Activated CD8-positive, alpha-beta T cell treated with anti-CD3 and anti-CD28 coated beads, Interleukin-2, amount 10 ng/mL, durations not matched to agents 7 days and 5 days (primary cell): ENCODE measurements at regions of chr6 and their contacts with region 1.

Region 1: GRCh38 chr6:159098636-159099106 is 53.9 kb upstream of the TAGAP start:
- DNase-seq: peak; percentile 71
- ATAC-seq: peak; percentile 57
- H3K4me3 Mint-ChIP-seq: peak overlapping the region; percentile 58
- H3K27ac Mint-ChIP-seq: peak overlapping the region; percentile 90
- H3K4me1 Mint-ChIP-seq: peaks cover 76% of the 10 kb centered on the region
- H3K27me3 Mint-ChIP-seq: no peaks in the 10 kb centered on the region

Region 2: DNA sequence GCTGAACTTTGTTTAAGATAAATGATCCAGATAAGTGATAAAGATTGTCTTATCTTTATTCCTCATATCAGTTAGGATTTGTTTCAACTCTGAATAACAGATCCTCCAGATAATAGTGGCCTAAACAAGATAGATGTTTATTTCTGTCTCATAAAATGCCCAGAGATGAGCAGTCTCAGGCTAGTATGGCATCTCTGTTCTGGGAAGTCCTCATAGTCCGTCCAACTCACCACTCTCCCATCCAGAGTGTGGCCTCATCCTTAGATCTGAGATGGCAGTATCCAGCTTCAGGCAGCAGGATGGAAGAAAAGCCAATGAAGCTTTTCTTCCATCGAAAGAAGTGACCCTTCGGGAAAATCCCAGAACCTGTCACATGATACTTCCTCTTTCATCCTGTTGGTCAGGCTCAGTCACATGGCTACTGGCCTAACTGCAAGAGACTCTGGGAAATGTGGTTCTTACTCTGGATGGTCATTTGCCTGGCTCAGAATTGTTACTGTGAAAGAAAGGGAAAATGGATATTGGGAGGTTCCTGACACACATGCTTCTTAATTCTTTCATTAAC is 24.5 kb before region 1 on chr6:
- CTCF ChIA-PET with region 1: interaction called, 33 read pairs
- POLR2A ChIA-PET with region 1: no interaction called
- DNase-seq: peak; percentile 17
- ATAC-seq: no peak
- H3K4me3 Mint-ChIP-seq: no peak overlapping the region
- H3K27ac Mint-ChIP-seq: no peak overlapping the region
- H3K4me1 Mint-ChIP-seq: peaks cover 56% of the 10 kb centered on the region
- H3K27me3 Mint-ChIP-seq: no peaks in the 10 kb centered on the region

Region 3: GRCh38 chr6:159084493-159085091 is 14.1 kb before region 1 on chr6:
- CTCF ChIA-PET with region 1: interaction called, 33 read pairs
- POLR2A ChIA-PET with region 1: interaction called, 13 read pairs
- DNase-seq: no peak
- ATAC-seq: no peak
- H3K4me3 Mint-ChIP-seq: no peak overlapping the region
- H3K27ac Mint-ChIP-seq: no peak overlapping the region
- H3K4me1 Mint-ChIP-seq: peaks cover 25% of the 10 kb centered on the region
- H3K27me3 Mint-ChIP-seq: no peaks in the 10 kb centered on the region